ENCODE measurements at regions of chr9 and their contacts with region 1.

Region 1: DNA sequence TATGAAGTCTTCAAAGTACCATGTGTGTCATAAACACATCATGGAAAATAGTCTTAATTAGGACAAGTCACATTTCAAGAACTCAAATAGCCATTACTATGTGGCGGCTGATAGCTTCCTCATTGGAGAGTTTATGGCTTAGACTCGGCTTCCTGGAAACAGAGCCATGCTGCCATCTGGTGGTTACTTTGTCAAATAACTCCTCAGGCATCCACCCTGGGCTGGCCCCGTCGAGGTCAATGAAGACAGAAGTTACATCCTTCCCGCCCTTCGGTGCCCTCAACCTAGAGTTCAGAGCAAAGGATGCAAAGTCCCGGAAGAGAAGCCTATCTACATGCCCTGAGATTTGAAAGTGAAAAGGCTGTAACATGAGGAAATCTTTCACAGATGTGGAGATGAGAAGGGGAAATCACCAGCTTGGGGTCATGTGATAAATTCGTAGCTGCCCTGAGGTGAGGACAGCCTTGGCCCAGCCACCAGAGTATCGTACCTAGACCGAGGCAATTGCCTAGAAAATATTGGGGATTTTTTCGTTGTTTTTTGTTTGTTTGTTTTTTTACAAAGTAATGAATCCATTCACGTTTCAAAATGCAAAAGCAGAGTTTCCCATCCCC is 45.5 kb upstream of the ZNF169 start:
- DNase-seq: no peak
- H3K4me3 ChIP-seq: no peak overlapping the region
- CTCF ChIP-seq: peak; percentile 69

Region 2: DNA sequence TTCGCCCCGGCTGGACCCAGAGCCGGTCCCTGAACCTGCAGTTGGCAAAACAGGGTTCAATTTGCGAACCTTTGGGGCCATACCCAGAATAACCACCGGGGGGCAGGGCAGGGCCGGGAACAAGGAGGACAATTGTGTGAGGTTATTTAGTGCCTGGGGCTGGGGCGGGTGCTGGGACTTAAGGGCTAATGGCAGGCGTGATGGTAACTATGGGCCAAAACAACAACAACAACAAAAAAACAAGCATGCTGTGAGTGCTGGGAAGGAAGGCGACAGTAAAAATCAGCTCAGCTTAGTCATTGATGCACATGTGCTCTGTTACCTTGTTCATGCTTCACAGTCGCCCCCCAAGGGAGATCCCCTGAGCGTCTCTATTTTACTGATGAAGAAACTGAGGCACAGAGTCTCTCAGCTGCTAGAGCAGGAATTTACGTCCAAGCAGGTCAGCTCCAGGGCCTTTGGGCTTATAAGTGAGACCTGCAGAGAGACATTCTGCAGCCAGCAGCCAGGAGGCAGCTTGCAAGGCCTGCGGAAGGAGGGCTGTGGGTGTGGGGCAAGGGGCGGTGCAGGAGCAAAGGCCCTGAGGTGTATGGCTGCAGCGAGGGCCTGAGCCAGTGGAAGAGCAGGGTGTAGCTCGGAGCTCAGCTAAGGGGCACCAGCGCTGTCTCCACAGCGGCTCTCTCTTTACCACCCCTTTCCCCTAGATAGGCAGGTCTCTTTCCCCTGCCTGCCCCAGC is 531.2 kb before region 1 on chr9:
- CTCF ChIA-PET with region 1: interaction called, 24 read pairs
- POLR2A ChIA-PET with region 1: no interaction called
- DNase-seq: no peak
- H3K4me3 ChIP-seq: no peak overlapping the region
- CTCF ChIP-seq: peak; percentile 81

Region 3: DNA sequence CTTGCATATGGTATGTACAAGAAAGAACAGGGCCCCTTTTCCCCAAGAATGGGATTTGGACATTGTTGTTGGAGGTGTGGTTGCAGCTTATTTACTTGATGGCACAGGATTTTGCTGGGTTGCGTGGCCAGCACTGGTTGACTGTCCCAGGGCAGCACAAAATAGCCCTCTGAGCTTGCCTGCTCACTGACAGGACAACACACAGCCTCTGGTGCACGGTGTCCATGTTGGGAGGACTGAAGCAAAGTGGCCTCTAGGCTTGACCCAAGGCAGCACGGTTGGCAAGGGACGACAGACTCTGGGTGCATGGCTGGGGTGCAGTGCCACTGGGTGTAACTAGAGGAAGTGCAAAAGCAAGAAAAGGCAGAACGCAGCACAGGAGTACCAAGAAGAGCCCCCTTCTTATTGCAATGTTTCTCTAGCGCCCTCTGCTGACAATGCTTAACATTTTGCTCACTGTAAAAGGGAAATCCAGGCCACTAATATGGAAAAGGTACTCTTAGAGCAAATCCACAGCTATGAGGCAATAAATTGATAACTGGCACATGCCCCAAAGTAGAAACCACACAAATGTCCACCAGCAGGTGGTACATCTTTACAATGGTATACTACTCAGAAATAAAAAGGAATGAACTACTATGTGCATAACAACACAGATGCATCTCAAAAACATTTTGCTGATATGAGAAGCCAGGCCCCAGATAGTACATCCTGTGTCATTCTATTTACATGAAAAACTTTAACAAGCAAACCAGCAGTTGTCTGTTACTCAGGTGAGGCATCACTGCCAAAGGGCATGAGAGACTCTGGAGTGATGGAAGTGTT is 211.1 kb before region 1 on chr9:
- CTCF ChIA-PET with region 1: interaction called, 319 read pairs
- POLR2A ChIA-PET with region 1: no interaction called
- DNase-seq: no peak
- H3K4me3 ChIP-seq: no peak overlapping the region
- CTCF ChIP-seq: peak; percentile 68

Region 4: DNA sequence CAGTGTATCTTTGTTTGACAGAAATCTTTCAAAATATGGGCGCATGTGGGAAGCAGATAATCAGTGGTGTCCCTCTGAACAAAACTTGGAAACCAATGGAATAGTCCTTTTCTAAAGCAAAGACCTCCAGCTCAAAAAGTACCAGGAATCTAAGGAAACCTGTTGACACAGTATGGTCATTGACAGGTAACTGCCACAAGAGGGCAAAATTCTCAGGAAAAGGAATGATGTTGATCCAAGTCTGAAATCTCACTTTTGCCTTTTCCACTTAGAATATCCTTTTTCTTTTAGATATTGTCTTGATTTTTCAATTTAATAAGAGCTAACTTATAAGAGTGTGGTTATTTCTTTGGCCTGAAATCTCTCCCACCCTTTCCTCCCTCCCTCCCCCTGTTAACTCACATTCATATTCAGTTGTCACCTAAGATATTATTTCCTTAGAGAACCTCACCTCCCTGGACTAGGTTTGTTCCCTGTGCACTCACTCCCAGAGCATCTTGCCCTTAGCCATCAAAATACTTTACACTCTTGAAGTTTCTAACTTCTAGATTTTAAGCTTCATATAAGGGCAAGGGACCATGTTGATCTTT is 199.5 kb before region 1 on chr9:
- CTCF ChIA-PET with region 1: interaction called, 319 read pairs
- POLR2A ChIA-PET with region 1: no interaction called
- DNase-seq: no peak
- H3K4me3 ChIP-seq: no peak overlapping the region
- CTCF ChIP-seq: peak; percentile 46

Region 5: DNA sequence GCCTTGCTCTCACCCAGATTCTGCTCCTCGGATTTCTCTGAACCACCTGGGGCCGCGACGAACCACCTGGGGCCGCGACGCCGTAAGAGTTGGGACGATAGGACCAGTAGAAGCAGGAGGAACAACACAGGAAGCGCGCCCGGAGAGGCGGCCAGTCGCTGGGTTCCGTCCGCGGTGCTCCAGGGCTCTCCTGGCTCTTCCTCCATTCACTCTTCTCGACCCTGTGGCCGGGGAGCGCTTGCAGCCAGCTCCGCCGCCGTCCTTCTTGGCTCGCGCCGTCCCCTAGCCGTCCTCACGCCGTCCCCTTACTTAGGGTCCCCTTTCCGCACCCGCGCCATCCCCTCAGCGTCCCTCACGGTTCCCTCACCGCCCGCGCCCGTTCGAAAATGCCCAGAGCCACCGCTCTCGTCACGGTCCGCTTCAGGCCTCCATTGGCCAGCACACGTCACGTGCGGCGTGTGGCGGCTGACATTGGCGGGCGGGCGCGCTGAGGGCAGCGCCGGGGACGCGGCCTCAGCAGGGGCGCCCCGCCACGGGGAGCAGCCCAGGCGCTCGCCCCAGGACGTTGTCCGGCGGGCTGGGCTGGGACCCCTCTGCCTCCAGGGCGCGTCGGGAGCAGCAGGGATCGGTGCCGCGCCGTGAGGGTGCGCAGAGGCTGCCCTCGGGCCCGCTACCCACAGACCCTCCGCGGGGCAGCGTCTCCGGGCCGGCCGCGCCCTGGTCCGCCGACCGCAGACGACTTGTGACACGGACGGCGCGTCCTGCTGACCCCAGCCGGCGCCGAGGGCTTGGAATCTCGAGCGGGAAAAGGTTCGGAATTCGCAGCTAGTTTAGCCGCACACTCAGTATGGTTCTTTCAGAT is 183.1 kb before region 1 on chr9:
- CTCF ChIA-PET with region 1: interaction called, 16 read pairs
- POLR2A ChIA-PET with region 1: no interaction called
- DNase-seq: peak; percentile 14
- H3K4me3 ChIP-seq: peak overlapping the region; percentile 78
- CTCF ChIP-seq: no peak

Region 6: GRCh38 chr9:94065535-94065961 is 148.1 kb before region 1 on chr9:
- CTCF ChIA-PET with region 1: interaction called, 378 read pairs
- POLR2A ChIA-PET with region 1: no interaction called
- DNase-seq: no peak
- H3K4me3 ChIP-seq: no peak overlapping the region
- CTCF ChIP-seq: peak; percentile 78

Region 7: GRCh38 chr9:94076557-94076956 is 137.1 kb before region 1 on chr9:
- CTCF ChIA-PET with region 1: interaction called, 35 read pairs
- POLR2A ChIA-PET with region 1: no interaction called
- DNase-seq: no peak
- H3K4me3 ChIP-seq: no peak overlapping the region
- CTCF ChIP-seq: no peak

Region 8: GRCh38 chr9:94445846-94446245 is 232.2 kb after region 1 on chr9:
- CTCF ChIA-PET with region 1: no interaction called
- POLR2A ChIA-PET with region 1: no interaction called
- DNase-seq: no peak
- H3K4me3 ChIP-seq: no peak overlapping the region
- CTCF ChIP-seq: no peak